ENCODE measurements at regions of chr16 and their contacts with region 1.

Region 1: GRCh38 chr16:10743610-10744393 is at the start of gene NUBP1:
- DNase-seq: peak; percentile 98 to 100 (median 99)
- ATAC-seq: peak; percentile 94
- H3K4me3 ChIP-seq: peak within 1 kb of the TSS; percentile 88
- H3K4me3 Mint-ChIP-seq: peak within 1 kb of the TSS; percentile 93
- H3K27ac ChIP-seq: peak within 1 kb of the TSS; percentile 95 to 99
- H3K27ac Mint-ChIP-seq: peak within 1 kb of the TSS; percentile 97
- H3K4me1 ChIP-seq: peaks cover 22% of the 10 kb centered on the region
- H3K4me1 Mint-ChIP-seq: peaks cover 29% of the 10 kb centered on the region
- H3K27me3 ChIP-seq: no peaks in the 10 kb centered on the region
- H3K27me3 Mint-ChIP-seq: no peaks in the 10 kb centered on the region
- CTCF ChIP-seq: no peak
- total RNA-seq, gene NUBP1: 19.3 to 20.1 TPM

Region 2: GRCh38 chr16:8797364-8798173 is 1946.2 kb before region 1 on chr16 and contains the starts of genes PMM2 and TMEM186:
- CTCF ChIA-PET with region 1: no interaction called
- POLR2A ChIA-PET with region 1: no interaction called
- intact Hi-C with region 1: loop called in 1 of 2 experiments (anchors 2 kb)
- DNase-seq: peak; percentile 87 to 98 (median 93)
- ATAC-seq: peak; percentile 96
- H3K4me3 ChIP-seq: peak within 1 kb of the TSS; percentile 98
- H3K4me3 Mint-ChIP-seq: peak within 1 kb of the TSS; percentile 98
- H3K27ac ChIP-seq: peak within 1 kb of the TSS; percentile 82 to 83
- H3K27ac Mint-ChIP-seq: peak within 1 kb of the TSS; percentile 89
- H3K4me1 ChIP-seq: peaks cover 39% of the 10 kb centered on the region
- H3K4me1 Mint-ChIP-seq: peaks cover 48% of the 10 kb centered on the region
- H3K27me3 ChIP-seq: no peaks in the 10 kb centered on the region
- H3K27me3 Mint-ChIP-seq: no peaks in the 10 kb centered on the region
- CTCF ChIP-seq: no peak
- total RNA-seq, gene PMM2: 24.2 to 27.0 TPM
- total RNA-seq, gene TMEM186: 1.9 to 3.1 TPM

Region 3: GRCh38 chr16:8963825-8964441 is 1779.9 kb before region 1 on chr16 and contains the start of gene USP7:
- CTCF ChIA-PET with region 1: no interaction called
- POLR2A ChIA-PET with region 1: no interaction called
- intact Hi-C with region 1: loop called in 1 of 2 experiments (anchors 5 kb)
- DNase-seq: peak; percentile 85 to 97 (median 91)
- ATAC-seq: peak; percentile 88
- H3K4me3 ChIP-seq: peak within 1 kb of the TSS; percentile 75
- H3K4me3 Mint-ChIP-seq: peak within 1 kb of the TSS; percentile 97
- H3K27ac ChIP-seq: peak within 1 kb of the TSS; percentile 64 to 81
- H3K27ac Mint-ChIP-seq: peak within 1 kb of the TSS; percentile 94
- H3K4me1 ChIP-seq: peaks cover 42% of the 10 kb centered on the region
- H3K4me1 Mint-ChIP-seq: peaks cover 47% of the 10 kb centered on the region
- H3K27me3 ChIP-seq: no peaks in the 10 kb centered on the region
- H3K27me3 Mint-ChIP-seq: no peaks in the 10 kb centered on the region
- CTCF ChIP-seq: no peak
- total RNA-seq, gene USP7: 259 to 268 TPM

Region 4: DNA sequence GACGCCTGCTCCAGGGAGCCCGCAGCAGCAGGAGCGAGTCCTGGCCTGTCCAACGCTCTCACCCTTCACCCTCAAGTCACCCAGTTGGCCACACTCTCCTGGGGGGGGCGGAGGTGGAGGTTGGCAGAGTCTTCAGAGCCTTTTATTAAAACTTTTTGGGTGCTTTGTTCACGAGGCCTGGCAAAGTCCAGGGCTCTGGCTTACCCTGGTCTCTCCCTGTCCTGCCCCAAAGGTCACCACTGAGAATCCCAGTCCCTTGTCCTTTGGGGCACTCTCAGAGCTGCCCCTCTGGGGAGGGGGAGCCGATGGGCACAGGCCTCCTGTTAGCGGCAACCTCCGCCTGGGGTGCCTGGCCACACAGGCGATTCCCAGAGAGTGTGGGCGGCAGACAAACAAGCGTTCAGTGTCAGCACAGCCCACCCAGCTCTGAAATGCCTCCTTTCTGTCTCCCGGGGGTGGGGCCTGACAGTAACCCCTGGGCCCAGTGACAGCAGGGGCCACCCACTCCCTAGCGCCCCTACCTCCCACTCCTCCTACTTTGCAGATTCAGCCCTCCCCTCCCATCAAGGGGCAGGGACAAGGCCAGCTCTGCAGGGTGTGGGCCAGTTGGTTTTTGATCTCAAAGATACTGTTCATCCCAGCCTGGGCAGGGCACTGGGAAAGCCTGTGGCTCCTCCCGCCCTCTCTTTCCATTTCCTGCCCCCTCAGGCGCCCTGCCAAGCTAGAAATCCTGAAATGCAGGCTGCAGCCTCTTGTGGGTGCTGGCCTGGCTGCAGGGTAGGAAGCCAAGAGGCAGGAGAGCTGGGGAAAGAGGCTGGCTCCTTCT is 126.9 kb before region 1 on chr16:
- CTCF ChIA-PET with region 1: no interaction called
- POLR2A ChIA-PET with region 1: no interaction called
- intact Hi-C with region 1: no loop called
- DNase-seq: no peak
- ATAC-seq: no peak
- H3K4me3 ChIP-seq: no peak overlapping the region
- H3K4me3 Mint-ChIP-seq: no peak overlapping the region
- H3K27ac ChIP-seq: no peak overlapping the region
- H3K27ac Mint-ChIP-seq: no peak overlapping the region
- H3K4me1 ChIP-seq: no peaks in the 10 kb centered on the region
- H3K4me1 Mint-ChIP-seq: no peaks in the 10 kb centered on the region
- H3K27me3 ChIP-seq: peaks cover 5 to 18% of the 10 kb centered on the region in 2 experiments
- H3K27me3 Mint-ChIP-seq: peaks cover 37% of the 10 kb centered on the region
- CTCF ChIP-seq: no peak

Region 5: GRCh38 chr16:10731790-10732189 is 12.0 kb before region 1 on chr16:
- CTCF ChIA-PET with region 1: no interaction called
- POLR2A ChIA-PET with region 1: interaction called, 3 read pairs
- intact Hi-C with region 1: loop called in 1 of 2 experiments (anchors 2 kb)
- DNase-seq: no peak
- ATAC-seq: no peak
- H3K4me3 ChIP-seq: no peak overlapping the region
- H3K4me3 Mint-ChIP-seq: no peak overlapping the region
- H3K27ac ChIP-seq: no peak overlapping the region
- H3K27ac Mint-ChIP-seq: no peak overlapping the region
- H3K4me1 ChIP-seq: no peaks in the 10 kb centered on the region
- H3K4me1 Mint-ChIP-seq: peaks cover under 1% of the 10 kb centered on the region
- H3K27me3 ChIP-seq: no peaks in the 10 kb centered on the region
- H3K27me3 Mint-ChIP-seq: no peaks in the 10 kb centered on the region
- CTCF ChIP-seq: no peak

Region 6: GRCh38 chr16:10765772-10766171 is 22.0 kb after region 1 on chr16:
- CTCF ChIA-PET with region 1: no interaction called
- POLR2A ChIA-PET with region 1: no interaction called
- intact Hi-C with region 1: no loop called
- DNase-seq: peak in 3 of 14 experiments; percentile 37 to 61 (median 50)
- ATAC-seq: no peak
- H3K4me3 ChIP-seq: no peak overlapping the region
- H3K4me3 Mint-ChIP-seq: no peak overlapping the region
- H3K27ac ChIP-seq: no peak overlapping the region
- H3K27ac Mint-ChIP-seq: peak overlapping the region; percentile 72
- H3K4me1 ChIP-seq: peaks cover 12% of the 10 kb centered on the region
- H3K4me1 Mint-ChIP-seq: peaks cover 1% of the 10 kb centered on the region
- H3K27me3 ChIP-seq: no peaks in the 10 kb centered on the region
- H3K27me3 Mint-ChIP-seq: no peaks in the 10 kb centered on the region
- CTCF ChIP-seq: no peak

Region 7: GRCh38 chr16:10791048-10791447 is 47.2 kb after region 1 on chr16:
- CTCF ChIA-PET with region 1: no interaction called
- POLR2A ChIA-PET with region 1: no interaction called
- intact Hi-C with region 1: no loop called
- DNase-seq: no peak
- ATAC-seq: no peak
- H3K4me3 ChIP-seq: no peak overlapping the region
- H3K4me3 Mint-ChIP-seq: no peak overlapping the region
- H3K27ac ChIP-seq: no peak overlapping the region
- H3K27ac Mint-ChIP-seq: no peak overlapping the region
- H3K4me1 ChIP-seq: no peaks in the 10 kb centered on the region
- H3K4me1 Mint-ChIP-seq: no peaks in the 10 kb centered on the region
- H3K27me3 ChIP-seq: no peaks in the 10 kb centered on the region
- H3K27me3 Mint-ChIP-seq: no peaks in the 10 kb centered on the region
- CTCF ChIP-seq: no peak

Region 8: GRCh38 chr16:10828851-10829731 is 85.3 kb after region 1 on chr16:
- CTCF ChIA-PET with region 1: no interaction called
- POLR2A ChIA-PET with region 1: no interaction called
- intact Hi-C with region 1: no loop called
- DNase-seq: peak in 2 of 14 experiments; percentile 39 to 57
- ATAC-seq: no peak
- H3K4me3 ChIP-seq: no peak overlapping the region
- H3K4me3 Mint-ChIP-seq: no peak overlapping the region
- H3K27ac ChIP-seq: no peak overlapping the region
- H3K27ac Mint-ChIP-seq: no peak overlapping the region
- H3K4me1 ChIP-seq: no peaks in the 10 kb centered on the region
- H3K4me1 Mint-ChIP-seq: no peaks in the 10 kb centered on the region
- H3K27me3 ChIP-seq: no peaks in the 10 kb centered on the region
- H3K27me3 Mint-ChIP-seq: peaks cover 2% of the 10 kb centered on the region
- CTCF ChIP-seq: no peak

Region 9: DNA sequence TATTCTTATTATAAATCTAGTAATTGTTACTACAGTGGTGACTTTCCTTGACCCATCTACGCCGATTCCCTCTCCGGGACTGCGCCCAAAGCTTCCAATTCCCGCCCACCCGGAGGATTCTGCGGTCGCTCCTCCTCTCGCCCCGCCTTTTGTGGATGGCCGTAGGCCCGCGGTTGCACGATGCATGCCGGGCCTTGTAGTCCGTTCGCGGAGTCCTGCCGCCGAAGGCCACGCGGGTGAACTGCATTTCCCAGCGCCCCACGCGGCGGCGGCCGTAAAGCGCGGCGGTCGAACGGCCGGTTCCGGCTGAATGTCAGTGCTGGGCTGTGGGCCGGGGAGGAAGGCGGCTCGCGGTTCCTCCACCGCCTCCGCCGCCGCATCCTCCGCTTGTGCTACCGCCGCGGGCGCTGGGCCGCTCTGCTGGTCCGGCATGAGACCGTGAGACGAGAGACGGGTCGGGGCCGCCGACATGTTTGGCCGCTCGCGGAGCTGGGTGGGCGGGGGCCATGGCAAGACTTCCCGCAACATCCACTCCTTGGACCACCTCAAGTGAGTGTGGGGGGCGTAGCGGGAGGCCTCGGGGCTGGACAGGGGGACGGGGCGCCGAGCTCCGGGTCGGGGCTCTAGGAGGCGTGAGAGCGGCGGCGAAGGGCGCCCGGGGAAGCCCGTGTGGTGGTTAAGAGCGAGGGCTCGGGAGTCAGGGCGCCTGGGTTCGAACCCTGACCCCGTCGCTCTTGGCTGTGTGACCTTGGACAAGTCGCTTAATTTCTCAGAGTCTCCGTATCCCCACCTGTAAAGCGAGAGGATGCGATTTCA is 200.7 kb after region 1 on chr16 and contains the start of gene CLEC16A:
- CTCF ChIA-PET with region 1: no interaction called
- POLR2A ChIA-PET with region 1: interaction called, 5 read pairs
- intact Hi-C with region 1: loop called (anchors 5 to 10 kb)
- DNase-seq: peak; percentile 89 to 98 (median 95)
- ATAC-seq: peak; percentile 76
- H3K4me3 ChIP-seq: peak within 1 kb of the TSS; percentile 85
- H3K4me3 Mint-ChIP-seq: peak within 1 kb of the TSS; percentile 96
- H3K27ac ChIP-seq: peak within 1 kb of the TSS in 1 of 2 donors; percentile 55
- H3K27ac Mint-ChIP-seq: peak within 1 kb of the TSS; percentile 76
- H3K4me1 ChIP-seq: peaks cover 73% of the 10 kb centered on the region
- H3K4me1 Mint-ChIP-seq: peaks cover 73% of the 10 kb centered on the region
- H3K27me3 ChIP-seq: no peaks in the 10 kb centered on the region
- H3K27me3 Mint-ChIP-seq: no peaks in the 10 kb centered on the region
- CTCF ChIP-seq: no peak
- total RNA-seq, gene CLEC16A: 21.7 to 22.7 TPM

Measured in CD4-positive, alpha-beta T cell (primary cell).